Breast epithelium (tissue), 4 donors: ENCODE measurements at regions of chr20 and their contacts with region 1.

Region 1: GRCh38 chr20:354298-355064 is 7.6 kb downstream of the NRSN2 start:
- DNase-seq: peak; percentile 57 to 72
- H3K4me3 ChIP-seq: no peak overlapping the region
- H3K27ac ChIP-seq: no peak overlapping the region
- H3K4me1 ChIP-seq: no peaks in the 10 kb centered on the region
- H3K27me3 ChIP-seq: no peaks in the 10 kb centered on the region
- CTCF ChIP-seq: peak; percentile 60 to 91 (median 90)
- POLR2A ChIP-seq: no peak

Region 2: DNA sequence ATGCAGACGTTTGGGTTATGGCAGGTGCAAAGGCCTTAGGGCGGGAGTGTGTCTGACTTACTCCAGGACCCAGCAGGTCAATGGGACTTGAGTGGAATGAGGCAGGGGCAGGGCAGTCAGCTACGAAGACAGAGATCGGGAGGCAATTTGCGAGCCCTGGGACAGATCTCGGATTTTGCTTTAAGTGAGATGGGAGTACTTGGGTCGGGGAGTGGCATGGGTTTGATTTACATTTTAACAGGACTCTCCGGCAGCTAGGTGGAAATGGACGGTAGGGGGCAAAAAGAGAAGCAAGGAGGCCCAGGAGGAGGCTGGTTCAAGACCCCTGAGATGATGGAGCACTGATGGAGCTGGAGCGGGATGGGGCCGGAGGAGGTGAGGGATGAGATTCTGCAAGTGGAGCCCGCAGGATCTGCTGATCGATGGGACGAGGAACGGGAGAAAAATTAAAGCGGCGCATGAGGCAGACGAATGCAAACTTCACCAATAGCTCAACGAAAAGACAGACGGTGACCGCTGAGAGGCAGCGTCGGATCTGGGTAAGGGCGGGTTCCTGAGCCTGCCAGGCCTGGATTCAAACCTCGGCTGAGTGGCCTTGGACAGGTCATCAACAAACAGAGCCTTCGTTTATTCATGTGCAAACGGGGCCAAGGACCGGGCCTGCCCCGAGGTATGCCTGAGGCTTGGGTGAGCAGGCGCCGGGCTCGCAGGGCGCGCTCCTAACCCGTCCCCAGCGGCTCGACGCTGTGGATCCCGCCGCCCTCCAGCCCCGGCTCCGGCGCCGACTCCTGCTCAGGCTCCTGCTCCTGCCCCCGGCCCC is 52.9 kb after region 1 on chr20:
- intact Hi-C with region 1: loop called (anchors 10 kb)
- DNase-seq: peak; percentile 58 to 73
- H3K4me3 ChIP-seq: peak overlapping the region; percentile 96 to 100 (median 98)
- H3K27ac ChIP-seq: peak overlapping the region; percentile 60 to 98
- H3K4me1 ChIP-seq: peaks cover 0 to 8% of the 10 kb centered on the region in 2 donors
- H3K27me3 ChIP-seq: no peaks in the 10 kb centered on the region
- CTCF ChIP-seq: no peak
- POLR2A ChIP-seq: no peak